ENCODE measurements at regions of chr10 and their contacts with region 1.

Region 1: GRCh38 chr10:68184546-68184945 is 47.4 kb downstream of the ATOH7 start:
- ATAC-seq: peak in 2 of 8 experiments; percentile 24 to 75
- H3K4me3 ChIP-seq: no peak overlapping the region
- H3K27ac ChIP-seq: no peak overlapping the region
- H3K4me1 ChIP-seq: peaks cover 0 to 3% of the 10 kb centered on the region in 2 donors

Region 2: DNA sequence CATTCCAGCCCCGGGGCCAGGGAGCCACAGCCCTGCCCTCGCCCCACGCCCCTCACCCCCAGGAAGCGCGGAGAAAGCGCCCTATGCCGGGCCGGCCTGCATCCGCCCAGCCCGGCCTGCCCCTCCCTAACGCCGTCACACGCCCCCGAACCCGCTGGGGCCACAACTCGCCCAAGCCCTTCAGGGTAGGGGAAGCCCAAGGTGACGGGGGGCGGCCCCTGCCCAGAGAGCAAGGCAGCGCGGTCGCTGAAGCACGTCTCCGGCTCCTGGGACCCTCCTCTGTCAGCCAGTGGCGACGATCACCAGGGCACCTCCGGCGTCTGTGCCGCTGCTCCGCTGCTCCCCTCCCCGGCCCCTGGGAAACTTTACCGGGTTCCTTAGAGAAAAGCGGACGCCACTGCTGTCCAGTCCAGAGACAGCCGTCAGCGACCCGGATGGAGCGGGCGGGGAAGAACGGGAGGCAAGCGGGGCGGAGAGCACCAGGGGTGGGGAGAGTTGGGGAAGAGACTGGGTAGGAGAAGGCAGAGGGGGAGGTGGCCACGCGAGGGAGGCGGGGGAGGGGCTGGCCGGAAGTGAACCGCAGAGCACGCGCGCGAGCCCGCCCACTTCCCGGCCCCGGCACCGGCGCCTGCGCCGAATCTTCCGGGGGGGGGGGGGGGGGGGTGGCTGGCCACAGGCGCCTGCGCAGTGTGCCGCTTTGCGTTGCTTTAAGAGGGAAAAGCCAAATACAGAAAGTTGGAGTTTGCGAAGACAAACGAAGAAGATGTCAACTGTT is 109.6 kb before region 1 on chr10 and contains the start of gene HERC4:
- in situ Hi-C with region 1: loop called in 1 of 9 experiments (anchors 25 kb)
- ATAC-seq: peak; percentile 90 to 96 (median 94)
- H3K4me3 ChIP-seq: peak within 1 kb of the TSS; percentile 73 to 99 (median 85)
- H3K27ac ChIP-seq: peak within 1 kb of the TSS; percentile 84 to 95
- H3K4me1 ChIP-seq: peaks cover 11 to 27% of the 10 kb centered on the region in 2 donors
- total RNA-seq, gene HERC4: 16.4 to 80.5 (median 40.3) TPM